ENCODE measurements at regions of chr12 and their contacts with region 1.

Region 1: DNA sequence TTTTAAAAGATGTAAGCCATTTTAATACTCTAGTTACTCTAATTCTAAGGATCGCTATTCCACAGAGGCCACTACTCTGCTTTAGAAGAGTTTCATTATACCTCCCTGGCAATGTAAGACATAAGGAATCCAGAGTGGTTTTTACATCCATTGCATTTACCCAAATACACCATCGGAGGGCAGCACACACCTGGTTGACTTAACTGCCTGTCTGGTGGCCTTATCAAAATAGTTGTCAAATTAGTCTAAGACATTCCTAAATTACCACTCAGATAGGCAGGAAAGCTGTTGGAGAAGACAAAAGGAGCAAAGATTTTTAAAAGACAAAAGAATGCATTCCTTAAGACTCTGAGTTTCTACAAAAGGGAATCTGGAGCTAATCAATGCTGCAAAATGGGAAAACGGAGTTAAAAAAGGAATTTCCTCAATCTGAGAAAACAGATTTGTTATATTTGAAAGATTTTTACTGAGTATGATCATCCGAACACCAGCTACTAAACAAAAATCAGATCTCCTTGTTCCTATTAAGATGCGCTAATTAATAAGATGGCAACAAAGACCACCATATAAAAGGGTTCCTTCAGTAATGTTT is 33.8 kb upstream of the FGD4 start:
- DNase-seq: no peak
- ATAC-seq: peak; percentile 85

Region 2: GRCh38 chr12:31951008-31951407 is 414.6 kb before region 1 on chr12:
- intact Hi-C with region 1: no loop called
- DNase-seq: no peak
- ATAC-seq: no peak

Region 3: GRCh38 chr12:32671930-32672780 is 306.6 kb after region 1 on chr12:
- intact Hi-C with region 1: loop called (anchors 2 kb)
- DNase-seq: no peak
- ATAC-seq: peak; percentile 92

Measured in Right ventricle myocardium superior (tissue), 1 donor.